ENCODE measurements at regions of chr18 and their contacts with region 1.

Region 1: DNA sequence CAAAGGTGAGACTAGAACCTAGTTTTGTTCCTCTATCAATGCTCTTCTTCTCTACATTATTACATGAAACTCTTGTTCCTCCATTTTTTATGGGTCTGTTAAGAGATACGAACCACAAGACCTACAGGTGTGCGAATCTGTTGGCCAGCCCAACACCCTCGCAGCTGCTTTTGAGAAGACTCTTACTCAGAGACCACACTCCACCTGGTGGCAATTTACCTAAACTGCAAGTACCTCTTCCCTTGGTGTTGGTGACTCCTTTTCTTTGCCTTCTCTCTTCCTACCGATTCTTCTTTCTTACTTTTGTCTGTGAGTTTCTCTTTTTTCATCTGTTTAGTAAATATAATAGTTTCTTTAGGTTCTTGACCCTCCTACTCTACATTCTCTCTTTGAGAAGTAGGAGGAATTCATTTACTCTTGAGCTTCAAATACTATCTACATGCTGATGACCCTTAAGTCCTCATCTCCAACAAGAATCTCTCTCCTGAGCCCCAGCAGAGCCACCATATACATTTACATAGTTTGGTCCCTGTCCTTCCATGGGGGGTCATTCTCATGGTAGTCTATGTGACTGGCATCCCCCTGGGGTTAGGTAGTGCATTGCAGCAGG is 81.8 kb upstream of the GAREM1 start:
- DNase-seq: no peak
- ATAC-seq: peak; percentile 92
- H3K4me3 ChIP-seq: no peak overlapping the region
- H3K27ac ChIP-seq: no peak overlapping the region
- H3K4me1 ChIP-seq: no peaks in the 10 kb centered on the region
- H3K27me3 ChIP-seq: no peaks in the 10 kb centered on the region; a peak in 1 of 4 replicates
- CTCF ChIP-seq: peak; percentile 73 to 75 (median 74); a peak in 5 of 6 replicates
- EP300 ChIP-seq: no peak
- POLR2A ChIP-seq: no peak
- RAD21 ChIP-seq: peak; percentile 74

Region 2: DNA sequence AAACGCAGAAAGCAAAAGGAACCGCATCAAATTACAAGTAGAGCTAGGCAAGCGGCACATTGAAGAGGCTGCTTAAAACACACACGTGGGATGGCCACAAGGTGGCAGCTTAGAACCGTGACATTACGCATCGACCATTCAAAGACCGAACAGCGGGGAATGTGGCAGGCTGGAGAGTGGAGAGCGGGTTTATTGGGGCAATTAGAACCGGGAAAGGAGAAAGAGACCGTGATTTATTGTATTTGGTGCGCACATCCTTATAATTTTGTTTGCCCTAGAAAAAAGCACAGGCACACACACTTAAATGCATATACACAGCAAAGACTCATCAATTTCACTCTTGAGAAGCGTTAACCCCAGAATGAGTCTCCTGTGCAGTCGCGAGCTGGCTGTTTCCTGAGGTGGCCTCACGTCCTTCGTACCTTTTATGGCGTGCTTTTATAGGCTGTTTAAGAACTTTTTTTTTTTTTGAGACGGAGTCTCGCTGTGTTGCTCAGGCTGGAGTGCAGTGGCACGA is 394.4 kb before region 1 on chr18:
- CTCF ChIA-PET with region 1: interaction called, 38 read pairs
- POLR2A ChIA-PET with region 1: no interaction called
- RAD21 ChIA-PET with region 1: interaction called, 19 read pairs
- SMC1A ChIA-PET with region 1: interaction called, 13 read pairs
- in situ Hi-C with region 1: loop called (anchors 5 kb)
- intact Hi-C with region 1: loop called (anchors 1 kb)
- DNase-seq: peak; percentile 20
- ATAC-seq: peak; percentile 98
- H3K4me3 ChIP-seq: no peak overlapping the region
- H3K27ac ChIP-seq: no peak overlapping the region
- H3K4me1 ChIP-seq: no peaks in the 10 kb centered on the region; the same call in 1 of the 2 replicates
- H3K27me3 ChIP-seq: no peaks in the 10 kb centered on the region
- CTCF ChIP-seq: peak; percentile 83 to 91 (median 85)
- EP300 ChIP-seq: no peak
- POLR2A ChIP-seq: no peak
- RAD21 ChIP-seq: peak; percentile 89

Region 3: DNA sequence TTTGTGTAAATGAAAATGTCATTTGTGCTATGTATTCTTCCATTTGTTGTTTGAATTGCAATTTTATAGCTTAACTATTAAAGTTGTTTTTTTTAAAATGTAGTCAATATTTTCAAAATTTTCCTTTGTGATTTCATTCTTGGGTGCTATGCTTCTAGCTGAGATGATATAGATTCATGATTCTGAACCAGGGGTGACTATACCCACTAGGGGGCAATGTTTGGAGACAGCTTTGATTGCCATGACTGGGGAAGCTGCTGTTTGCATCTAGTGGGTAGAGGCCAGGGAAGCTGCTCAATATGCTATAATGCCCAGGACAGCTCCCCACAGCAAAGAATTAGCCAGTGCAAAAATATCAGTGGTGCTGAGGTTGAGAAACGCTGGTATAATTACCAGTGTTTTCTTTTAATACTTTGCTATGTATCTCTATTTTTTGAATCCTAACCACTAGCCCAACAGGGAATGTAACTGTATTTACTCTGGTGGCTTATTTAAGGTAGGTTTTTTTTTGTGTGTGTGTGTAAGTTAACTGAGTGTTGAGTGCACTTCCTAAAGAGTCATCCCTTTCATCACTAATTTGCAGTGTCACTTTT is 262.9 kb before region 1 on chr18:
- CTCF ChIA-PET with region 1: interaction called, 12 read pairs
- POLR2A ChIA-PET with region 1: no interaction called
- RAD21 ChIA-PET with region 1: no interaction called
- SMC1A ChIA-PET with region 1: no interaction called
- in situ Hi-C with region 1: no loop called
- intact Hi-C with region 1: loop called (anchors 5 kb)
- DNase-seq: no peak
- ATAC-seq: peak; percentile 84
- H3K4me3 ChIP-seq: no peak overlapping the region
- H3K27ac ChIP-seq: no peak overlapping the region
- H3K4me1 ChIP-seq: no peaks in the 10 kb centered on the region
- H3K27me3 ChIP-seq: no peaks in the 10 kb centered on the region
- CTCF ChIP-seq: peak; percentile 47 to 68 (median 63)
- EP300 ChIP-seq: no peak
- POLR2A ChIP-seq: no peak
- RAD21 ChIP-seq: peak; percentile 53

Region 4: GRCh38 chr18:32566960-32567359 is 14.4 kb after region 1 on chr18:
- CTCF ChIA-PET with region 1: interaction called, 15 read pairs
- POLR2A ChIA-PET with region 1: no interaction called
- RAD21 ChIA-PET with region 1: no interaction called
- SMC1A ChIA-PET with region 1: no interaction called
- in situ Hi-C with region 1: no loop called
- intact Hi-C with region 1: no loop called
- DNase-seq: no peak
- ATAC-seq: no peak
- H3K4me3 ChIP-seq: no peak overlapping the region
- H3K27ac ChIP-seq: no peak overlapping the region
- H3K4me1 ChIP-seq: no peaks in the 10 kb centered on the region
- H3K27me3 ChIP-seq: no peaks in the 10 kb centered on the region
- CTCF ChIP-seq: no peak
- EP300 ChIP-seq: no peak
- POLR2A ChIP-seq: no peak
- RAD21 ChIP-seq: no peak